CD4-positive, alpha-beta memory T cell (primary cell): ENCODE measurements at regions of chr1 and their contacts with region 1.

Region 1: GRCh38 chr1:236603991-236604904 is at the start of gene HEATR1:
- DNase-seq: peak; percentile 80 to 87 (median 83)
- H3K4me3 ChIP-seq: peak within 1 kb of the TSS; percentile 86 to 99
- H3K4me3 Mint-ChIP-seq: peak within 1 kb of the TSS; percentile 90 to 99 (median 98)
- H3K27ac ChIP-seq: peak within 1 kb of the TSS; percentile 65
- H3K27ac Mint-ChIP-seq: peak within 1 kb of the TSS; percentile 92 to 98 (median 96)
- H3K4me1 ChIP-seq: peaks cover 15% of the 10 kb centered on the region
- H3K4me1 Mint-ChIP-seq: peaks cover 14 to 43% (median 27%) of the 10 kb centered on the region in 4 donors
- H3K27me3 ChIP-seq: peaks cover 4% of the 10 kb centered on the region
- H3K27me3 Mint-ChIP-seq: peaks cover 6 to 7% of the 10 kb centered on the region in 2 donors
- total RNA-seq, gene HEATR1: 44.0 to 57.5 TPM

Region 2: GRCh38 chr1:236103646-236104218 is 500.5 kb before region 1 on chr1:
- CTCF ChIA-PET with region 1: no interaction called
- POLR2A ChIA-PET with region 1: no interaction called
- intact Hi-C with region 1: loop called (anchors 5 kb)
- DNase-seq: peak; percentile 53 to 67 (median 58)
- H3K4me3 ChIP-seq: no peak overlapping the region
- H3K4me3 Mint-ChIP-seq: peak overlapping the region in 1 of 8 donors; percentile 23
- H3K27ac ChIP-seq: no peak overlapping the region
- H3K27ac Mint-ChIP-seq: no peak overlapping the region
- H3K4me1 ChIP-seq: no peaks in the 10 kb centered on the region
- H3K4me1 Mint-ChIP-seq: peaks cover 2 to 5% (median 4%) of the 10 kb centered on the region in 4 donors
- H3K27me3 ChIP-seq: no peaks in the 10 kb centered on the region
- H3K27me3 Mint-ChIP-seq: peaks cover 0 to under 1% of the 10 kb centered on the region in 2 donors

Region 3: GRCh38 chr1:236523701-236524141 is 80.5 kb before region 1 on chr1 and contains the start of gene LGALS8:
- CTCF ChIA-PET with region 1: no interaction called
- POLR2A ChIA-PET with region 1: interaction called, 3 read pairs
- intact Hi-C with region 1: loop called (anchors 2 kb)
- DNase-seq: peak; percentile 80 to 88 (median 84)
- H3K4me3 ChIP-seq: peak within 1 kb of the TSS; percentile 87 to 96
- H3K4me3 Mint-ChIP-seq: peak within 1 kb of the TSS; percentile 94 to 100 (median 99)
- H3K27ac ChIP-seq: peak within 1 kb of the TSS; percentile 94
- H3K27ac Mint-ChIP-seq: peak within 1 kb of the TSS; percentile 91 to 99 (median 99)
- H3K4me1 ChIP-seq: peaks cover 22% of the 10 kb centered on the region
- H3K4me1 Mint-ChIP-seq: peaks cover 19 to 63% (median 35%) of the 10 kb centered on the region in 4 donors
- H3K27me3 ChIP-seq: no peaks in the 10 kb centered on the region
- H3K27me3 Mint-ChIP-seq: no peaks in the 10 kb centered on the region
- total RNA-seq, gene LGALS8: 193 to 196 TPM

Region 4: DNA sequence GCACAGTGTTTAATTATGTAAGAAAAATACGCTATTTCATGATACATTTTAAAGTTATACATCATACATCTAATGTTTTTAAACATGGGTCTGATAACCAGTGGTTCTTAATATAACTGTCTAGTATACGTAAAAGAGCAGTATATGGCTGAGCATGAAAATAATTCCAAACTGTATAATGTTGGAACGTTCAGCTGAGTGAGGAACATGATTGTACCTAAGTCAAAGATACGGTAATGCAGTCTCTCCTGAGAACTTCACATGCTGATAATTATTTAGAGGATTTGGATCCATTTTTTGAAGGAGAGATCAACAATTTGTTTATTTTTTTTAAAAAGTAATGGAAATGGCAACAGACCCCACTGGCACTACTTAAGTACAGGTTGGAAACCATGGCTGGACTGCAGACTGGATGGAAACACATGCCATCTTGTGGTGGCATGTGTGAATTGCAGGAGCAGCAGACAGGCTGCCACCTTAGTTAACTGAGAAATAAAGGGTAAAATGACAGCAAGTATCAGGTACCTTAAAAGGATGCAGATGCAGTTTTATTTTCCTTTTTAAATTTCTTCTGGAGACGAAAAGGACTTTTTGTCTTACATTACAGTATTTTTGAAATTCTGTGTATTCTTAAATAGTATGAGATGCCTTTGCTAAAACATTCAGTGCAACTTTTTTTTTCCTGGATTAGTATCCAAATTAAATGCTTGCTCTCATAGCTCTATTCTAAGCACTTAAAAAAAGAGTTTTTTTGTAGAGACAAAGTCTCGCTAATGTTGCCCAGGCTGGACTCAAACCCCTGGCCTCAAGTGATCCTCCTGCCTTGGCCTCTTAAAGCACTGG is 264.6 kb after region 1 on chr1:
- CTCF ChIA-PET with region 1: no interaction called
- POLR2A ChIA-PET with region 1: no interaction called
- intact Hi-C with region 1: loop called (anchors 1 kb)
- DNase-seq: peak in 4 of 5 donors; percentile 32 to 41 (median 35)
- H3K4me3 ChIP-seq: no peak overlapping the region
- H3K4me3 Mint-ChIP-seq: no peak overlapping the region
- H3K27ac ChIP-seq: no peak overlapping the region
- H3K27ac Mint-ChIP-seq: peak overlapping the region in 2 of 7 donors; percentile 17 to 65
- H3K4me1 ChIP-seq: no peaks in the 10 kb centered on the region
- H3K4me1 Mint-ChIP-seq: peaks cover 0 to 4% (median 0%) of the 10 kb centered on the region in 4 donors
- H3K27me3 ChIP-seq: no peaks in the 10 kb centered on the region
- H3K27me3 Mint-ChIP-seq: no peaks in the 10 kb centered on the region